Activated T-helper 2 cell treated with anti-CD3 and anti-CD28 coated beads, Interferon-gamma antibody, Interleukin-2, Interleukin-4, amounts not matched to agents 10 μg/mL and 5 μg/mL and 100 μg/mL, durations not matched to agents 14 hours and 24 hours and 36 hours (primary cell): ENCODE measurements at regions of chr2 and their contacts with region 1.

Region 1: GRCh38 chr2:201257956-201258665 is 2.2 kb upstream of the CASP8 start:
- DNase-seq: peak; percentile 94
- H3K4me3 Mint-ChIP-seq: peak overlapping the region; percentile 89
- H3K27ac Mint-ChIP-seq: peak overlapping the region; percentile 97
- H3K4me1 Mint-ChIP-seq: peaks cover 69% of the 10 kb centered on the region
- H3K27me3 Mint-ChIP-seq: no peaks in the 10 kb centered on the region

Region 2: DNA sequence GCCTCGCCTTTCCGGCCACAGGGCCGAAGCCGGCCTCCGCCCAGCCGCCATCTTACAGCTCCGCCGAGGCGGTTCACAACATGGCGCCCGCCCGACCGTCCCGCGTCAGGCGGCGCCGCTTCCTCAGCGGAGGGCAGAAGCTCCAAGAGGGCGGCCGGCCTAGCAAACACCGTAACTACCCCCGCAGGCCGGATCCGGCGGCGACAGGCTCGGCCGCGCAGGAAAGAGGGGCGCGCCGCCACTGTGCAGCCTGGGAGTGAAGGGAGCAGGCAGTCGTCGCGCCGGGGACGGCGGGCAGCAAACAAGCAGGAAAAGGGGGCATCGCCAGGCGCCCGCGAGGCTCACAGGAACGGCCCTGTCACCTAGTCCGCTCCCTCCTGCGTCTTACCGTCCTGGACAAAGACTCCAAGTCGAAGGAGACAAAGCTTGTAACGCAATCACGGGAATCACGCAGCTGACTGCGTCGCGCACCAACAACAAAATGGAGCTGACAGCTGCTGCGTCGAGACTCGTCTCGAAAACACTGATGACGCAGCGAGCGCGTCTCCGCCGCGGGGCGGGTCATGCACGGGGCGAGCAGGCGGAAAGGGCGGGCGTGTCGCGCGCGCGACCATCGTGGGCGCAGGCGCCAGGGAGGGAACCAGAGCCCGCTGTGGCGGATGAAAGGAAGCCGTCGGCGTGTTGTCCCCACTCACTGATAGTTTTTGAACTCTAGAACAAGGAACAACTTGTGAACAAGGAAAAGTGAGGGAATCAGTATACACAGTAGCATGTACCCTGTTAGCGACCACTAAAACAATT is 393.7 kb before region 1 on chr2 and contains the start of gene CLK1:
- intact Hi-C with region 1: loop called (anchors 1 kb)
- DNase-seq: peak; percentile 91
- H3K4me3 Mint-ChIP-seq: peak within 1 kb of the TSS; percentile 93
- H3K27ac Mint-ChIP-seq: peak within 1 kb of the TSS; percentile 94
- H3K4me1 Mint-ChIP-seq: peaks cover 32% of the 10 kb centered on the region
- H3K27me3 Mint-ChIP-seq: no peaks in the 10 kb centered on the region
- total RNA-seq, gene CLK1: 114 and 122 TPM in 2 replicates

Region 3: GRCh38 chr2:201130524-201131186 is 127.5 kb before region 1 on chr2:
- intact Hi-C with region 1: loop called (anchors 2 kb)
- DNase-seq: no peak
- H3K4me3 Mint-ChIP-seq: peak overlapping the region; percentile 90
- H3K27ac Mint-ChIP-seq: peak overlapping the region; percentile 92
- H3K4me1 Mint-ChIP-seq: peaks cover 50% of the 10 kb centered on the region
- H3K27me3 Mint-ChIP-seq: no peaks in the 10 kb centered on the region

Region 4: DNA sequence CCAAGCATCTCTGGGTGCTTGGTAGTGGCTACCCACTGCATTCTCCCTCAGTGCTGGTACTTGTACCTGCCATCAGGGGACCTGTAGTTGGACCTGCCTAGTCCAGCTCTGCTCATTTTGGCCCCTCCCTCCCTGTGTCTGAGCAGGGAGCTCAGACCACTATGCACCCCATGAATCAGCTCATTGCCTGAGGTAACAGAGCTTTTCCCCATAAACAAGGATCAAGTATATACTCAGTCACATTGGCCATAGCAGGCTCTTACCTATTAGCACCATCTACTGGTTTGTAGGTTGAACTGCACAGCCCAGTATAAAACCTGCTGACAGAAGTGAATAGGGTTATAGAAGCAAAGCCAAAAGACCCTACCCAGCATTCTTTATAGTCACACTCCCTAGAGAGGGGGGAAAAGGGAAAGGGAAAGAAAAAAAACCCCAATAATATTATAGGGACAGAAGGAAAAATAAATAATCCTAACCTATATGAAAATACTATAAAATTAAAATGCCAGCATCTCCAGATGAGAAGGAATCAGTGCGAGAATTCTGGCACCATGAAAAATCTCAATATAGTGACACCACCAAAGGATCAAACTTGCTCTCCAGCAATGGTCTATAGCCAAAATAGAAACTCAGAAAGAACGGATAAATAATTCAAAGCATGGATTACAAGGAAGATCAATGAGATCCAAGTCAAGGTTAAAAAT is 105.9 kb after region 1 on chr2:
- intact Hi-C with region 1: loop called (anchors 5 kb)
- DNase-seq: no peak
- H3K4me3 Mint-ChIP-seq: no peak overlapping the region
- H3K27ac Mint-ChIP-seq: no peak overlapping the region
- H3K4me1 Mint-ChIP-seq: peaks cover 31% of the 10 kb centered on the region
- H3K27me3 Mint-ChIP-seq: no peaks in the 10 kb centered on the region

Region 5: GRCh38 chr2:201532686-201533304 is 274.7 kb after region 1 on chr2:
- intact Hi-C with region 1: loop called (anchors 5 kb)
- DNase-seq: no peak
- H3K4me3 Mint-ChIP-seq: no peak overlapping the region
- H3K27ac Mint-ChIP-seq: peak overlapping the region; percentile 83
- H3K4me1 Mint-ChIP-seq: peaks cover 7% of the 10 kb centered on the region
- H3K27me3 Mint-ChIP-seq: peaks cover 2% of the 10 kb centered on the region